ENCODE measurements at regions of chr16 and their contacts with region 1.

Region 1: DNA sequence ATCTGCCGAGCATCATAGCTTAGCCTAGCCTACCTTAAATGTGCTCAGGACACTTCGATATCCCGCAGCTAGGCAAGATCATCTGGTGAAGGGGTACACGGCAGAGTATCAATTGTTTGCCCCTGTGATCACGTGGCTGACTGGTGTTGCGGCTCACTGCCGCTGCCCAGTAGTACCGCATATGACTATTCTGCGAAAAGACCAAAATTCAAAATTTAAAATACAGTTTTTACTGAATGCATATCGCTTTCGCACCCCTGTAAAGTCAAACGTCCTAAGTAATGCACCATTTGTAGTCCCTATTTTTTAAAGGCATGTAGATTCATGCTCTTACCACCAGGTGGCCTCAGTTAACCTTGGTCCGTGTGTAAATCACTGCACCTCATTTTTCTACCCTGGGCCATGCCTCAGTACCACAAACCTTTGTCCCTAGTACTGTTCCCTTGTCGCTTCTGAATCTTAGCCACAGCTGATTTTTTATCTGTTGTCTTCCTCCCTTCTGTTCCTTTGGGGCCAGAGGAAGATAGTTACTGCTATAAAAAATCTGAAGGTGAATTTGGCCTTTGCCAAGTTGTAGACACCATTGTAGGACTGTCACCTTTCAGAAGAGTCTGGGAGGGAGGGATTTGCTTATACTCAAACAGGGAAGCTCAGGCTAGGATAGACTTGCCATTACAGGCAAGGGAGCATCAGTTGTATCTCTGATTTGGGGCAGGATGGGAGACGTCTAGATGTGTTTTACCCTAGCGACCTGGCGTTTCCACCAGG is 34.4 kb downstream of the WWP2 start:
- DNase-seq: no peak
- H3K4me3 ChIP-seq: peak overlapping the region; percentile 48
- H3K27ac ChIP-seq: no peak overlapping the region
- H3K4me1 ChIP-seq: peaks cover 7% of the 10 kb centered on the region
- H3K27me3 ChIP-seq: no peaks in the 10 kb centered on the region
- CTCF ChIP-seq: peak; percentile 93

Region 2: DNA sequence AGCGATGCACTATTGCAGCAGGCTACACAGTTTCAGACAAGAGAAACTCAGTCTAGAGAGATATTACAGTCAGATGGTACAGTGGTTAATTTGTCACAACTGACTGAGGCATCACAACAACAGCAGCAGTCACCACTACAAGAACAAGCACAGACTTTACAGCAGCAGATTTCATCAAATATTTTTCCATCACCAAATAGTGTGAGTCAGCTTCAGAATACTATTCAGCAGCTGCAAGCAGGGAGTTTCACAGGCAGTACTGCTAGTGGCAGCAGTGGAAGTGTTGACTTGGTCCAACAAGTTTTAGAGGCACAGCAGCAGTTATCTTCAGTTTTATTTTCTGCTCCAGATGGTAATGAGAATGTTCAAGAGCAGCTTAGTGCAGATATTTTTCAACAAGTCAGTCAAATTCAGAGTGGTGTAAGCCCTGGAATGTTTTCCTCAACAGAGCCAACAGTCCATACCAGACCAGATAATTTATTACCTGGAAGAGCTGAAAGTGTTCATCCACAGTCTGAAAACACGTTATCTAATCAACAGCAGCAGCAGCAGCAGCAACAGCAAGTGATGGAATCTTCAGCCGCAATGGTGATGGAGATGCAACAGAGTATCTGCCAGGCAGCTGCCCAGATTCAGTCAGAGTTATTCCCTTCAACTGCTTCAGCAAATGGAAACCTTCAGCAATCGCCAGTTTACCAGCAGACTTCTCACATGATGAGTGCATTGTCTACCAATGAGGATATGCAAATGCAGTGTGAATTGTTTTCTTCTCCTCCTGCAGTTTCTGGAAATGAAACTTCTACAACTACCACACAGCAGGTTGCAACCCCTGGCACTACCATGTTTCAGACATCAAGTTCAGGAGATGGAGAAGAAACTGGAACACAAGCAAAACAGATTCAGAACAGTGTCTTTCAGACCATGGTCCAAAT is 104.3 kb before region 1 on chr16:
- intact Hi-C with region 1: no loop called
- DNase-seq: no peak
- H3K4me3 ChIP-seq: no peak overlapping the region
- H3K27ac ChIP-seq: no peak overlapping the region
- H3K4me1 ChIP-seq: no peaks in the 10 kb centered on the region
- H3K27me3 ChIP-seq: no peaks in the 10 kb centered on the region
- CTCF ChIP-seq: no peak

Region 3: DNA sequence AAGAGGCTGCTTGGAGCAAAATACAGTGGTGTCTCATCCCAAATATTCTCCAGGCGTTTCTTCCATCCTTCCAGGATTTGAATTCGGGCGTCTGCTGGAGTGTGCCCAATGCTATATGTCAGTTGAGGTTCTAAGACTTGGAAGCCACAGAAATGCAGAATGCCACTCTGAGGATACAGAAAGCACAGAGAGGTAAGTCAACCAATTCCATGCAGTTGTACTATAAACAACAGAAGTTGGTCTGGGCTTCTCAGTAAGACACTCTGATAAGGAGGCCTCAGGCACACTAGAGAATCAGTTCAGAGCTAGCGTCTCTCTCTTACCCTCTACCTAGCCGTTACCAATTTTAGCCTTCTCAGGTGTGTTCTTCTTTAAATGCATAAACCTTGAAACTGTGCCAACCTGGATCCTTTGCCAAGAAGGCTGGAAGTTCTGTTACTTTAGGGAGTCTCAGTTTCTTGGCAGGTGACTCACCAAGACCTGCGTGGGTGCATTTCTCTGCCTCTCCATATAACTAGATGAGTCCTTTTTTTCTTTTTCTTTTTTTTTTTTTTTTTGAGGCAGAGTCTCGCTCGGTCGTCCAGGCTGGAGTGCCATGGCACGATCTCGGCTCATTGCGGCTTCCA is 85.3 kb before region 1 on chr16:
- intact Hi-C with region 1: no loop called
- DNase-seq: no peak
- H3K4me3 ChIP-seq: no peak overlapping the region
- H3K27ac ChIP-seq: no peak overlapping the region
- H3K4me1 ChIP-seq: peaks cover 7% of the 10 kb centered on the region
- H3K27me3 ChIP-seq: no peaks in the 10 kb centered on the region
- CTCF ChIP-seq: no peak

Region 4: DNA sequence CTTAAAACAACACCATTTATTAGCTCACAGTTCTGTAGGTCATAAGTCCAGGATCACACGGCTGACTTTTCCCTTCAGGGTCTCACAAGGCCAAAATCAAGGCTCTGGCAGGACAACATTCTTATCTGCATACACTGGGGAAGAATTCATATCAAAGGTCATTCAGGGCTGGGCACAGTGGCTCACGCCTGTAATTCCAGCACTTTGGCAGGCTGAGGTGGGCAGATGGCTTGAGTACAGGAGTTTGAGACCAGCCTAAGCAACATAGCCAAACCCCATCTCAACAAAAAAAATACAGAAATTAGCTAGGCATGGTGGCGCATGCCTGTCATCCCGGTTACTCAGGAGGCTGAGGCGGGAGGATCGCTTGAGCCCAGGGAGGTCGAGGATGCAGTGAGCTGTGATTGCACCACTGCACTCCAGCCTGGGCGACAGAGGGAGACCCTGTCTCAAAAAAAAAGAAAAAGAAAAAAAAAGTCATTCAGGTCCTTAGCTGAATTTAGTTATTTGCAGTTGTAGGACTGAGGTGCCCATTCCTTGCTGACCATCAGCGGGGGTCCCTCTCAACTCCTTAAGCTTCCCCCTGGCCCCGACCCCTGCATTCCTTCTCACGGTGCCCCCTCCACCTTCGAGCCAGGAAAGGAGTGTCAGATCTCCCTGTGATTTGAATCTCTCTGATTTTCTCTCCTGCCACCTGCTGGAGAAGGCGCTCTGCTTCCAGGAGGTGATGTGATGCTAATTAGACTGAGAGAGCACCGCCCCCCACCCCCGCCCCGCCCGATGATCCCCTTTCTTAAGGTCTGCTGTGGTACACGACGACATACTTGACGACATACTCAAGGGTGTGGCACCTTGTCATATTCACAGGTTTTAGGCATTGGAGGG is 62.8 kb after region 1 on chr16:
- intact Hi-C with region 1: loop called (anchors 10 kb)
- DNase-seq: peak; percentile 40
- H3K4me3 ChIP-seq: no peak overlapping the region
- H3K27ac ChIP-seq: peak overlapping the region; percentile 96
- H3K4me1 ChIP-seq: peaks cover 66% of the 10 kb centered on the region
- H3K27me3 ChIP-seq: no peaks in the 10 kb centered on the region
- CTCF ChIP-seq: peak; percentile 51

Region 5: DNA sequence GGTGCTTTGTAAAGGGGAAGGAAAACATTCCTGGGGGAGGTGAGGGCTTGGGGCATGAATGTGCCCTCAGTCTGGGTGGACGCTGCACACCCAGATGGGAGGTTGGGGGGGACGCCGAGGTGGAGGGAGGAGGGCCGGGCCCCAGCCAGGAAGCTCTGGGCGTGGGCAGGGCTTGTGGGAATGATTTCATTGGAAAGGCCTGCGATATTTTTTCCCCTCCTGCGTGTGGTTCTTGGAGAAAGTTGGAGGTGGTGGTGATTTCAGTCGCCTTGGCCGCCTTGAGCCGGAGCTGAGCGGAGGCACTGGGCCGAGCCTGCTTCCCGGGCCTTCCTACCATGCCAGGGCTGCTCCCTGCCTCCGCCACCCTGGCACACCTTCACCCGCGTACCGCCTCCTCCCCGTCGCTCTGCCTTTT is 128.2 kb after region 1 on chr16:
- intact Hi-C with region 1: loop called (anchors 5 kb)
- DNase-seq: peak; percentile 69
- H3K4me3 ChIP-seq: peak overlapping the region; percentile 62
- H3K27ac ChIP-seq: peak overlapping the region; percentile 88
- H3K4me1 ChIP-seq: peaks cover 69% of the 10 kb centered on the region
- H3K27me3 ChIP-seq: no peaks in the 10 kb centered on the region
- CTCF ChIP-seq: no peak

Measured in left ventricle myocardium inferior (tissue), 1 donor.